Stomach (tissue), 19 donors: ENCODE measurements at regions of chr12 and their contacts with region 1.

Region 1: DNA sequence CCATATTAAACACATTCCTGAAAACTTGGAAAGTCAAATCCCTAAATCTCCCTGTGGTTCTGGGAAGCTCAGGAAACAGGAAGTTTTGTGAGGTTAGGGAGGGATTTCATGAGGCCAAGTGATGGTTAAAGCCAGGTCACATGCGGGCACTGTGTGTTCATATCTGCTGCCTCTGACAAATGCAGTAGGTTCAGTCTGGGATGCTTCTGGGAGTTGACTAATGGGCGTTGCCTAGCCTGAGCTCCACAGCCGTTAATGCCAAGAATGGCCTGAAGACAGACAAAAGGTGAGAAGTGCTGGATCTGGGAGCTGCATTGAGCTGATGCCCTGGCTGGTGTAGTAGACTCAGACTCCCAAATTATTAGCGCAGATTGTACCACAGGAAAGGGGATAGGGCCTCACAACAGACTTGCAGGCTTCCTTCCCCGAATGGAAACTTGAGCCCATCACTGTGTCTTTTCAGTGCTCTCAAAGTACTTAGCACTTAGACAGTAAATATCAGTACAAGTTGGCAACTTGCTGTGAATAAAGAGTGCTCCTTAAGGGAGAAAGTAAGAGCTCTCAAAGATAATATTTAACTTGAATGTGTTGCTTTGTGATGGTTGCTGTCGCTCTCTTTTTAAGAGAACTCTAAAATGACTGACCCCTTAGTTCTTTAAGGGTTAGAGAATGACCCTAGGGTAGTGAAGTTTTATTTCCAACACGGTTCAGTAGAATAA is 17.3 kb downstream of the GSG1 start:
- DNase-seq: no peak
- H3K4me3 ChIP-seq: no peak overlapping the region
- H3K27ac ChIP-seq: no peak overlapping the region
- H3K4me1 ChIP-seq: no peaks in the 10 kb centered on the region
- H3K27me3 ChIP-seq: no peaks in the 10 kb centered on the region
- CTCF ChIP-seq: no peak
- EP300 ChIP-seq: no peak
- POLR2A ChIP-seq: no peak

Region 2: GRCh38 chr12:13023811-13024530 is 62.2 kb before region 1 on chr12:
- intact Hi-C with region 1: loop called (anchors 10 kb)
- DNase-seq: peak; percentile 31 to 81
- H3K4me3 ChIP-seq: no peak overlapping the region
- H3K27ac ChIP-seq: no peak overlapping the region
- H3K4me1 ChIP-seq: peaks cover 0 to 17% (median 0%) of the 10 kb centered on the region in 4 donors
- H3K27me3 ChIP-seq: no peaks in the 10 kb centered on the region
- CTCF ChIP-seq: peak in 1 of 7 experiments; percentile 28
- EP300 ChIP-seq: no peak
- POLR2A ChIP-seq: no peak